Heart right ventricle (tissue), 16 donors: ENCODE measurements at regions of chr2 and their contacts with region 1.

Region 1: DNA sequence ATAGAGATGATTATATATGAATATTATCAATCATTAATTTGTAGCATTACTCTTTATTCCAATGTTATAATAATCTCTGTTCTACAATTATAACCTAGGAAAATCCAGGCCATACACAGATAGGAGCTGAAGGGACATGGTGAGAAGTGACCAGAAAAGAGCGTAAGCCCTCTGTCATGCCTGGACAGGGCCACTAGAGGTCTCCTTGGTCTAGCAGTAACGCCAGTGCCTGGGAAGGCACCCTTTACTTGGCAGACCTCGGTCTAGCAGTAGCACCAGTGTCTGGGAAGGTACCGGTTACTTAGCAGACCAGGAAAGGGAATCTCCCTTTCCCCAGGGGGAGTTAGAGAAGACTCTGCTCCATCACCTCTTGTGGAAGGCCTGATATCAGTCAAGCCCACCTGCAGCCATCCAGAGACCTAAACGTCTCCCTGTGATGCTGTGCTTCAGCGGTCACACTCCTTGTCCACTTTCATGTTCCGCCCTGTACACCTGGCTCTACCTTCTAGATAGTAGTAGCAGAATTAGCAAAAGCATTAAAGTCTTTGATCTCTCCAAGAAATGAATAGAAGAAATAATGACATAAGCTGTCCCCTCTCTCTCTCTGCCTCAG is 447.5 kb upstream of the FSIP2 start:
- DNase-seq: no peak
- ATAC-seq: peak in 2 of 8 donors; percentile 33 to 35
- H3K4me3 ChIP-seq: no peak overlapping the region
- H3K27ac ChIP-seq: no peak overlapping the region
- H3K4me1 ChIP-seq: no peaks in the 10 kb centered on the region
- H3K27me3 ChIP-seq: no peaks in the 10 kb centered on the region
- CTCF ChIP-seq: peak in 7 of 9 donors; percentile 32 to 62 (median 51)

Region 2: DNA sequence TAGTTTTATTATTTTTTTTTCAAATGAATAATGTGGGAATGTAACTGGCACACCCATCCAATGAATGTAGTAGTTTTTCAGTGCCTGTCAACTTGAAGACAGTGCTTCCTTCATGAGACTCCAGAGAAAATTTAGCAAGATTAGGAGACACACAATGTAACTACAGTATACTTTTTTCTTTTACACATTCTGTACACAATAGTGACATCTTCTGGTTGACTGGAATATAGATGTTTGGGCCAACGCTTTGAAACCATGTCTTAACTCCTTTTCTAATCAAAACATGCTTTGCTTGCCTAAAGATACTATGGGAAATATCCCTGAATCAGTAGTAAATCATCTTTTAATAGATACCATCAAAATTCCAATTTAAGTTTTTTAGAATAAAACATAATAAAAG is 965.4 kb after region 1 on chr2:
- intact Hi-C with region 1: loop called in 1 of 10 experiments (anchors 10 kb)
- DNase-seq: no peak
- ATAC-seq: peak in 1 of 8 donors; percentile 50
- H3K4me3 ChIP-seq: no peak overlapping the region
- H3K27ac ChIP-seq: no peak overlapping the region
- H3K4me1 ChIP-seq: peaks cover 0 to 3% (median 0%) of the 10 kb centered on the region in 9 donors
- H3K27me3 ChIP-seq: no peaks in the 10 kb centered on the region
- CTCF ChIP-seq: peak in 7 of 9 donors; percentile 43 to 67 (median 65)